K562 (cell line): ENCODE measurements at regions of chr11 and their contacts with region 1.

Region 1: GRCh38 chr11:3091791-3092602 is 34.8 kb upstream of the CARS1 start:
- DNase-seq: peak; percentile 84 to 95 (median 91)
- ATAC-seq: peak; percentile 96
- H3K4me3 ChIP-seq: no peak overlapping the region
- H3K27ac ChIP-seq: no peak overlapping the region
- H3K4me1 ChIP-seq: peaks cover 0 to 50% of the 10 kb centered on the region in 2 experiments; a peak in 2 of 5 replicates
- H3K27me3 ChIP-seq: no peaks in the 10 kb centered on the region
- CTCF ChIP-seq: peak; percentile 97 to 99 (median 98)
- EP300 ChIP-seq: no peak
- POLR2A ChIP-seq: no peak
- RAD21 ChIP-seq: peak; percentile 97

Region 2: DNA sequence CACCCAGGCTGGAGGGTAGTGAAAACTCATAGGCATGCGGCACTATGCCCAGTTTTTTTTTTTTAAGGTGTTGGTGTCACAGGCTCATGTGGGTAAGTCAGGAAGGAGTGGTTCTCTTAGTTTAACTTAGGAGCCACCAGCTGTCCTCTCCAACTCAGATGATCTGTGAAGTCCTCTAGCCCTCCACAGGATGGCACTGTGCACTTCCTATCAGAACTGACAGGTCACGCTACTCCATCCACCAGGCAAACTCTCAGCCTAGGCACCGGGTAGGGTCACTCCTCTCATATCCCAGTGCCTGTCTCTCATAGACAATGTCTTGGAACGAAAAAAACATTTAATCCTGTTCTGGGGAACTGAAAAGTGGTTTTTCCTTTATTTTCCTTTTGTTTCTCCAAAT is 116.4 kb before region 1 on chr11:
- CTCF ChIA-PET with region 1: interaction called, 12 read pairs
- POLR2A ChIA-PET with region 1: no interaction called
- in situ Hi-C with region 1: no loop called
- intact Hi-C with region 1: no loop called
- DNase-seq: peak; percentile 37 to 61 (median 44)
- ATAC-seq: peak; percentile 96
- H3K4me3 ChIP-seq: no peak overlapping the region
- H3K27ac ChIP-seq: no peak overlapping the region
- H3K4me1 ChIP-seq: no peaks in the 10 kb centered on the region
- H3K27me3 ChIP-seq: no peaks in the 10 kb centered on the region
- CTCF ChIP-seq: peak; percentile 57 to 60 (median 58)
- EP300 ChIP-seq: no peak
- POLR2A ChIP-seq: no peak
- RAD21 ChIP-seq: peak; percentile 34 to 42

Region 3: DNA sequence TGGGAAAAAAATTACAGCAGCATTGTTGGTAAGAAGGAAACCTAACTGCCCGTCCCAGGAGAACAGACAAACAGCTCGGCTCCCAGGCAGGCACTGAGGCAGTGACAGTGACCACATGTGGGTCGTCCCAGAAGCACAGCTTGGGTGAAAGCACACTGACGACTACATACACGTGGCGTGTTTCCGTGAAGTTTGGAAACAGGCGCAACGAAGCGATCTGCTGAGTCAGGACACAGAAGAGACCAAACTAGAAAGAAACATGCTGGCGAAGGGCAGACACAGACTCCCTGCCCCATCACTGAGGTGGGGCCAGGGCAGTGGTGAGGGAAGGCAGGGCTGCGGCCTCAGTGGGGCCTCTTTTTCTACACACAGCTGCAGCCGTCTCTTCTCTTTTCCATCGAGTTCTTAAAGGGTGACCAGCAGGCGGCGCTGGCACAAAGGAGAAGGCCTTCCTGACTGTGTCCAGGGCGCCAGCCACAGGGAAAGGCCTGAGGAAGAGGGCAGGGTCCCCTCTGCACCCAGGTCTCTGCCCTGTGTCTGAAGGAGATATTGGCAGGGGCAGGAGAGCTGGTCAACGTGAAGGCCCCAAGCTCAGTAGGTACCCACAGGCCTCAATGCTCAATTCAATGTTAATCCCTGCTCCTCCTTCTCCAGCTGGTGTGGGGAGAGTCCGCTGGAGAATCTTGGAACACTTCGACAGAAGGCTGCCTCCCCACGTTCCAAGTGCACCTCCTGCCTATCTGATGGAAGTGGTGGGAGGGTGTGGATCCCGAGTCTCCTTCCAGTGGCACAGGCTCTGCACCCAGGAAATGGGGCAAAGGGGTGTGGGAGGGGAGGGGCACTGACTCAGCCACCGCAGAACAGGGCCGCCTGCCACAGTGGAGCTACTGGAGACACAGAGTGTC is 54.7 kb before region 1 on chr11:
- CTCF ChIA-PET with region 1: interaction called, 68 read pairs
- POLR2A ChIA-PET with region 1: interaction called, 10 read pairs
- in situ Hi-C with region 1: loop called (anchors 5 kb)
- intact Hi-C with region 1: loop called (anchors 1 kb)
- DNase-seq: peak; percentile 58 to 81 (median 62)
- ATAC-seq: peak; percentile 95
- H3K4me3 ChIP-seq: no peak overlapping the region
- H3K27ac ChIP-seq: no peak overlapping the region
- H3K4me1 ChIP-seq: no peaks in the 10 kb centered on the region; a peak in 1 of 5 replicates
- H3K27me3 ChIP-seq: no peaks in the 10 kb centered on the region
- CTCF ChIP-seq: peak; percentile 83 to 88 (median 88)
- EP300 ChIP-seq: no peak
- POLR2A ChIP-seq: no peak
- RAD21 ChIP-seq: peak; percentile 74 to 80

Region 4: GRCh38 chr11:3043315-3043871 is 48.6 kb before region 1 on chr11:
- CTCF ChIA-PET with region 1: interaction called, 68 read pairs
- POLR2A ChIA-PET with region 1: interaction called, 10 read pairs
- in situ Hi-C with region 1: loop called (anchors 5 kb)
- intact Hi-C with region 1: no loop called
- DNase-seq: no peak
- ATAC-seq: no peak
- H3K4me3 ChIP-seq: no peak overlapping the region
- H3K27ac ChIP-seq: no peak overlapping the region
- H3K4me1 ChIP-seq: peaks cover 0 to 9% of the 10 kb centered on the region in 2 experiments; a peak in 2 of 5 replicates
- H3K27me3 ChIP-seq: no peaks in the 10 kb centered on the region
- CTCF ChIP-seq: no peak
- EP300 ChIP-seq: no peak
- POLR2A ChIP-seq: no peak
- RAD21 ChIP-seq: no peak